ENCODE measurements at regions of chr11 and their contacts with region 1.

Region 1: GRCh38 chr11:60887556-60887955 is 18.8 kb downstream of the PRPF19 start:
- DNase-seq: peak; percentile 67
- ATAC-seq: peak; percentile 92
- H3K4me3 Mint-ChIP-seq: no peak overlapping the region
- H3K27ac Mint-ChIP-seq: no peak overlapping the region
- H3K4me1 Mint-ChIP-seq: peaks cover 3% of the 10 kb centered on the region
- H3K27me3 Mint-ChIP-seq: no peaks in the 10 kb centered on the region
- CTCF ChIP-seq: no peak

Region 2: DNA sequence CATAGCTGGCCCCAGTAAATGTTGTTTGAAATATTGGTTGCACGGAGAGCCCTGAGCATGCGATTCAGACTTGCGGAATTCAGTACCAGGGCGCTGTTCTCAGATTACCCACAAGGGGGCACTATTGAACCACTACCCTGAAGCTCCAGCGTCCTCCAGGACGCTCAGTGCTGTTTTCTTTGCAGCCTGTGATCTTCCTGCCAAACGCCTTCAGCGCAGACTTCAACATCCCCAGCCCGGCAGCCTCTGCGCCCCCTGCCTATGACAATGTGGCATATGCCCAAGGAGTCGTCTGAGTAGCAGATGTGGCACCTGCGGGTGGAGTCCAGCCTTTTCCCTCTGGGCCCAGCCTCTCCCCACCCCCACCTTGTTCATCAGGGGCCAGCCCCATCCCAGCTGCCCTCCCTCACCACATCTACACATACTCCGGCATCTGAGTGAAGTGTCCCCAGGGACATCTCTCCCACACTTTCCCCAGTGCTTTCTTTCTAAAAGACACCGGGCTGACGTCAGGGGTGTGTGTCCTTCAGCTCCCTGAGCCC is 112.1 kb before region 1 on chr11:
- CTCF ChIA-PET with region 1: interaction called, 18 read pairs
- POLR2A ChIA-PET with region 1: no interaction called
- intact Hi-C with region 1: loop called (anchors 5 kb)
- DNase-seq: peak; percentile 92
- ATAC-seq: peak; percentile 98
- H3K4me3 Mint-ChIP-seq: no peak overlapping the region
- H3K27ac Mint-ChIP-seq: no peak overlapping the region
- H3K4me1 Mint-ChIP-seq: peaks cover 11% of the 10 kb centered on the region
- H3K27me3 Mint-ChIP-seq: no peaks in the 10 kb centered on the region
- CTCF ChIP-seq: peak; percentile 78

Region 3: GRCh38 chr11:60797846-60798630 is 89.5 kb before region 1 on chr11:
- CTCF ChIA-PET with region 1: no interaction called
- POLR2A ChIA-PET with region 1: no interaction called
- intact Hi-C with region 1: no loop called
- DNase-seq: no peak
- ATAC-seq: no peak
- H3K4me3 Mint-ChIP-seq: no peak overlapping the region
- H3K27ac Mint-ChIP-seq: no peak overlapping the region
- H3K4me1 Mint-ChIP-seq: no peaks in the 10 kb centered on the region
- H3K27me3 Mint-ChIP-seq: no peaks in the 10 kb centered on the region
- CTCF ChIP-seq: no peak

Region 4: DNA sequence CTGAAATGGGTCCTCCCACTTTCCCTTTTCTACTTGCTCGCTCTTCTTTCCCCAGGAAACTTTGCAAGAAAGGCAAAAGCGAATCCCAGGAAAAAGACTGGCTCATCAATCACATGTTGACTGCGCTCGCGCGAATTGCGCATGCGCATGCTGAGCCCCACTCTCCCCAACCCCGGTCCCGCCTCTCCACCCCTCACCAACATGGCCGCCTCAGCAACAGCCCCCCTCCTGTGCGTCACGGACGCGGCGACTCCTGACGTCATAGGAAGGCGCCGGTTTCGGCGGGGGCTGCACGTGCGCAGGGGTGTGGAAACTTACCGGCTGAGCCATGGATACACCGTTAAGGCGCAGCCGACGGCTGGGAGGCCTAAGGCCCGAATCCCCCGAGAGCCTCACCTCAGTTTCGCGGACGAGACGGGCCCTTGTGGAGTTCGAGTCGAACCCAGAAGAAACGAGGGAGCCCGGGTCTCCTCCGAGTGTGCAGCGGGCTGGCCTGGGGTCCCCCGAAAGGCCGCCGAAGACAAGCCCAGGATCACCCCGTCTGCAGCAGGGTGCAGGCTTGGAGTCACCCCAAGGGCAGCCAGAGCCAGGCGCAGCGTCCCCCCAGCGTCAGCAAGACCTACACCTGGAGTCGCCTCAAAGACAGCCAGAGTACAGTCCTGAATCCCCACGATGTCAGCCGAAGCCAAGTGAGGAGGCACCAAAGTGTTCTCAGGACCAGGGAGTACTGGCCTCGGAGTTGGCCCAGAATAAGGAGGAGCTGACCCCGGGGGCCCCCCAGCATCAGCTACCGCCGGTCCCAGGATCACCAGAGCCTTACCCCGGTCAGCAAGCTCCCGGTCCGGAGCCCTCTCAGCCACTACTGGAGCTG is 45.5 kb before region 1 on chr11 and contains the start of gene CCDC86:
- CTCF ChIA-PET with region 1: interaction called, 14 read pairs
- POLR2A ChIA-PET with region 1: interaction called, 6 read pairs
- intact Hi-C with region 1: no loop called
- DNase-seq: peak; percentile 96
- ATAC-seq: peak; percentile 98
- H3K4me3 Mint-ChIP-seq: peak within 1 kb of the TSS; percentile 75
- H3K27ac Mint-ChIP-seq: peak within 1 kb of the TSS; percentile 94
- H3K4me1 Mint-ChIP-seq: peaks cover 38% of the 10 kb centered on the region
- H3K27me3 Mint-ChIP-seq: no peaks in the 10 kb centered on the region
- CTCF ChIP-seq: no peak
- total RNA-seq, gene CCDC86: 48.1 to 51.4 TPM

Region 5: DNA sequence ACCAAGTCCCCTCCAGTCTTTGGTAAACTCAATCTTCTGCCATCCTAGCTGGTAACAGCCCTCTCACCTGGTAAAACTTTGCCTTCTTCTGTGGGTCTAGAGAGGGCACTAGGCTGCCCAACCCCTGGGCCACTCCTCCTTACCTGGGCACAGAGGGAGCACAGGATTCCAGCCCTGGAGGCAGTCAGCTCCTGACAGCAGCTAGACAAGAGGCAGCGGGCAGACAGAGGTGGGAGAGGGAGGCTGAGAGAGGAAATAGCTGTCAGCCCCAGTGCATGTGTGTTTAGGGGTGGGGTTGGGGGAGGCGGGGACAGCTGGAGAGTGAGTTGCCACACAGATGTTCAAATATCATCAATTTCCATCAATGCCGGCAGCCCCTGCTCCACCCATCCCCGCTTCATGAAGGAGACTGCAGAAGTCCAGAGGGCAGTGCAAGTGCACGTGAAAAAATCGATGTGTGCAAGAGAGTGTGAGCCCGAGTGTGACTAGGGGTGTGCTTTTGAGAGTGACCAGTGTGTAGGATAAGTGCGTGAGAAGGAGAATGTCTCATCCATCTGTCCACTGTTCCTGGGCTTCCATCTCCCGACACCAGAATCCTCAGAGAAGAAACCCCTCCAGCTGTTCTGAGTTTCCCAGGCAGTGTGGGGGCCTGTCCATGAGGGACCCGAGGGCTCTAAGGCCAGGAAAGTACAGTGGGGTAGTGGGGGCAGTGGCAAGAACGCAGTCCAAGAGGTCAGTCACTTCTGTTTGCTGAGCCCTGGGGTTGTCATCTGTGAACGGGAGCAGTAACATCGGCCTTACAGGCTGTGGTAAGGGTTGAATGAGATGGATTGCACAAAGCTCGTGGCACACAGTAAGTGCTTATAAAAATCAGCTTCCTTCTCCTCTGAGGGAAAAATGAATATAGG is 31.6 kb before region 1 on chr11 and contains the start of gene PTGDR2:
- CTCF ChIA-PET with region 1: interaction called, 10 read pairs
- POLR2A ChIA-PET with region 1: no interaction called
- intact Hi-C with region 1: no loop called
- DNase-seq: no peak
- ATAC-seq: no peak
- H3K4me3 Mint-ChIP-seq: no peak within 1 kb of the TSS
- H3K27ac Mint-ChIP-seq: no peak within 1 kb of the TSS
- H3K4me1 Mint-ChIP-seq: peaks cover 23% of the 10 kb centered on the region
- H3K27me3 Mint-ChIP-seq: no peaks in the 10 kb centered on the region
- CTCF ChIP-seq: no peak
- total RNA-seq, gene PTGDR2: 0.23 to 0.38 TPM

Region 6: DNA sequence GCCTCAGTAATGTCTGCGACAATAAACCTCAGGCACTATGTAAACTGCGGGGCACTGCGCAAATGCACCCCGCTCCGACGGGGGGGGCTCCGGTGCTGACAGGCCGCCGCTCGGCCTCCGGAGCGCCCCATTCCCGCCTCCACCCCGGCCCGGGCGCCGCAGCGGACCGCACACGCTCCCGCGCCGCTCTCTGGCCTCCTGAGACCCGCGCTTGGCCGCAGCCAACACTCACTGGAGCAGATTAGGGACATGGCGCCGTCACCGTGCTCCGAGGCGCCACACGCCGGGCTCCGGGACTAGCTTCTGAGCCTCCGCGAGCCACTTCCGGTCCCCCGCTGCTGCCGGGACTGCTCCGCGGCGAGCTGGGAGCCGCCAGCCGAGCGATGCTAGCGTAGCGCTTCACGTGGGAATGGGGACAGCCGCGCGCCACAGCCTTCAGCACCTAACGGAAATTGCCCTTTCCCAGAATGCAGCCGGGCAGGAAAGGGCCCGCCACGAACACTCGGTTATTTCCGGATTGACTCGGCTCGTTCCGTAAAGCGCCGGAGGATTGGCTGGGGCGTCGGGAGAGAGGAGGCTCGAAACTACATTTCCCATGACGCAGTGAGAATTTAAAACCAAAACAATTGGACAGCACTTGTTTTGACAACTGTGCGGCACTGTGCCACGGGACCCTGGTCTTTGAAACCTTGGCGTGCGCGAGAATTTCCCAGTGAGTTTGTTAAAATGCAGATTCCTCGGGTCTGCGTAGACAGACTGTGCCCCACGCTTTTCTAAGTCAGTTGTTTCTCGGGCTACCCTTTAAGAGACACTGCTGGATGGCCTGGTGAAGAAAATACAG is 18.8 kb after region 1 on chr11 and contains the start of gene PRPF19:
- CTCF ChIA-PET with region 1: interaction called, 67 read pairs
- POLR2A ChIA-PET with region 1: interaction called, 8 read pairs
- intact Hi-C with region 1: no loop called
- DNase-seq: peak; percentile 99
- ATAC-seq: peak; percentile 97
- H3K4me3 Mint-ChIP-seq: peak within 1 kb of the TSS; percentile 89
- H3K27ac Mint-ChIP-seq: peak within 1 kb of the TSS; percentile 95
- H3K4me1 Mint-ChIP-seq: peaks cover 50% of the 10 kb centered on the region
- H3K27me3 Mint-ChIP-seq: no peaks in the 10 kb centered on the region
- CTCF ChIP-seq: no peak
- total RNA-seq, gene PRPF19: 142 to 150 TPM

Measured in activated CD8-positive, alpha-beta T cell treated with anti-CD3 and anti-CD28 coated beads for 36 hours (primary cell).